Posterior vena cava (tissue), 2 donors: ENCODE measurements at regions of chr3 and their contacts with region 1.

Region 1: GRCh38 chr3:196081791-196082618 is at the start of gene TFRC:
- DNase-seq: peak; percentile 98
- total RNA-seq, gene TFRC: 73.4 to 132 TPM

Region 2: GRCh38 chr3:196198771-196199753 is 117.1 kb after region 1 on chr3:
- intact Hi-C with region 1: loop called (anchors 5 to 10 kb)
- DNase-seq: no peak